ENCODE measurements at regions of chr12 and their contacts with region 1.

Region 1: DNA sequence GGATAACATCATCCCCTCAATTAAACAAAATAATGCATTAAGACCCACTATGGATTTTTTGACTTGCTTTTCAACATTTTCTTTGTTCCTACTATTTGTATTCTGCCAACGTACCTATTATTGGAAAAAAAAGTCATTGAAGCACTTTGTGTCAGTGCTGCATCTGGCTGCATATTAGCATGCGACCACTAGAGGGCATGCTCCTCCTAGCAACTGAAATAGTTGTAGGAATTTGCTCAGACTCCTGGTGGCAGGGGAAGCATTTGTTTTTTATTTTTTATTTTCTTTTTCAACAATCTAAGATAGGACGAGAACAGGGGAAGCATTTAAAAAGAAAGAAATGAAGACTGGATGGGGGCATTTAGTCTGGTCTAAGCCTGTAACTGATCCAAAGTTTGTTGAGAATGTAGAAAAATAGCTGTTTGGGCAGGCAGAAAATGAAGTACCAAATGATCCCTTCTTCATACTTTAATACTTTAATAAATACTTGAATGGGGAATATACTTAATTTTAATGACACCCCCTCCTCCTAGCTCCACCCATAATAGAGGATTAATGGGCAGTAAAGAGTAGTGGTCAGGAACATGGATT is 14.5 kb upstream of the CLEC4A start:
- DNase-seq: peak; percentile 67 to 78 (median 70)
- H3K4me3 ChIP-seq: peak overlapping the region in 1 of 3 experiments; percentile 31
- H3K4me3 Mint-ChIP-seq: peak overlapping the region in 1 of 2 donors; percentile 71
- H3K27ac ChIP-seq: no peak overlapping the region
- H3K27ac Mint-ChIP-seq: peak overlapping the region in 1 of 7 donors; percentile 33
- H3K4me1 ChIP-seq: peaks cover 0 to 3% of the 10 kb centered on the region in 2 donors
- H3K4me1 Mint-ChIP-seq: peaks cover 4% of the 10 kb centered on the region
- H3K27me3 ChIP-seq: no peaks in the 10 kb centered on the region
- H3K27me3 Mint-ChIP-seq: peaks cover 0 to 2% (median 2%) of the 10 kb centered on the region in 3 donors
- CTCF ChIP-seq: peak; percentile 99

Region 2: GRCh38 chr12:8156845-8157244 is 47.9 kb after region 1 on chr12 and contains the start of gene ZNF705A:
- intact Hi-C with region 1: loop called in 1 of 2 experiments (anchors 10 kb)
- DNase-seq: peak; percentile 76 to 95 (median 95)
- H3K4me3 ChIP-seq: peak within 1 kb of the TSS in 1 of 3 experiments; percentile 51
- H3K4me3 Mint-ChIP-seq: peak within 1 kb of the TSS; percentile 35 to 83
- H3K27ac ChIP-seq: peak within 1 kb of the TSS; percentile 48 to 92
- H3K27ac Mint-ChIP-seq: peak within 1 kb of the TSS; percentile 97 to 100 (median 98)
- H3K4me1 ChIP-seq: peaks cover 37 to 48% of the 10 kb centered on the region in 2 donors
- H3K4me1 Mint-ChIP-seq: peaks cover 52% of the 10 kb centered on the region
- H3K27me3 ChIP-seq: no peaks in the 10 kb centered on the region
- H3K27me3 Mint-ChIP-seq: no peaks in the 10 kb centered on the region
- CTCF ChIP-seq: no peak
- polyA plus RNA-seq, gene ZNF705A: not detected

Region 3: DNA sequence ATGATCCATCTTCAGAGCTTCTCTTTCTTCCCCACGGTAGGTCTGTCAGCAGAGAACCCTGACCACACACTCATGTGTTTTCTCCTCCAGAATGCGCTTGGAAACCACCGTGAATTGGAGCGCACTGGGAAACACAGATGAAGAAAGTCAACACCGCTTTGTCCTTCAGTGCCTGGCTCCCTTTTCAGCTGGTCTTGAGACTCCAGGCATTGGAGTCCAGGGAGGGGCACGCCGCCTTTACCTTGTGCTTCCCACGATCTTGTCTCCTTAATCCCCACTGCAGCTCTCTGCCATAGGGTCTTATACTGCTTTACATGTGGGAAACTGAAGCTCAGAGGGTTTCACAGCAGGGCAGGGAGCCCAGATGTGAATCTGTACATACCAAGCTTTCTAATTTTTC is 117.5 kb after region 1 on chr12:
- intact Hi-C with region 1: loop called (anchors 5 to 10 kb)
- DNase-seq: no peak
- H3K4me3 ChIP-seq: no peak overlapping the region
- H3K4me3 Mint-ChIP-seq: no peak overlapping the region
- H3K27ac ChIP-seq: no peak overlapping the region
- H3K27ac Mint-ChIP-seq: peak overlapping the region in 1 of 7 donors; percentile 69
- H3K4me1 ChIP-seq: peaks cover 5 to 14% of the 10 kb centered on the region in 2 donors
- H3K4me1 Mint-ChIP-seq: peaks cover 20% of the 10 kb centered on the region
- H3K27me3 ChIP-seq: no peaks in the 10 kb centered on the region
- H3K27me3 Mint-ChIP-seq: peaks cover 0 to 3% (median 2%) of the 10 kb centered on the region in 3 donors
- CTCF ChIP-seq: no peak

Region 4: DNA sequence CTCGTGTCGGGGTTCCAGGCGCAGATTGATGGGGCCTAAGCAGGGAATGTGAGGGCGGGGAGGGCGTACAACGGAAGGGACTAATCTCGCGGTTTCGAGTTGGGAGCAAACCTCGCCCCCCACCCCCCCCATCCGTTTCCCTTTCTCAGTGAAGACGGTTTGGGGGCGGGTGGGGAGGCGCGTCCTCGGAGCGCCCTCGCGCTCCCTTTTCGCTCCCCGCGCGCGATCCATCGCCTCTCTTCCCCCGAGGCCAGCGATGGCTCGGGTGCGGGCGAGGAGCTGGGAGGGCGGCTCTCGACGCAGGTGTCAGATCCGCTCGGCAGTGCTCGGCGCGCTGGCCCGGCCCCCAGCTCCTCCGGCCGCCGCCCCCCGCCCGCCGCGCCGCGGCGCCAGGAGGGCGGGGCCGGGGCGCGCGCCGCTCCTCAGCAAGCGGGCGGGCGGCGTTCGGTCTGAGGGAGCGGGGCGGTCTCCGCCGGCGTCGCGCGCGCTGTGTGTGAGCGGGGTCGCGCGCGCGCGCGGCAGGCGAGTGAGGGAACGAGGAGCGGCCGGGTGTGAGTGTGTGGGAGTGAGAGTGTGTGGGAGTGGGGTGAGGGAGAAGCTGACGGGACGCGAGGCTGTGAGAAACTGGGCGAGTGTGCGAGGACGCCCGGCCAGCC is 588.7 kb after region 1 on chr12 and contains the start of gene RIMKLB:
- intact Hi-C with region 1: no loop called
- DNase-seq: peak; percentile 56 to 67 (median 67)
- H3K4me3 ChIP-seq: peak within 1 kb of the TSS; percentile 50 to 86 (median 75)
- H3K4me3 Mint-ChIP-seq: peak within 1 kb of the TSS; percentile 94 to 96
- H3K27ac ChIP-seq: peak within 1 kb of the TSS; percentile 56 to 79
- H3K27ac Mint-ChIP-seq: peak within 1 kb of the TSS; percentile 70 to 90 (median 80)
- H3K4me1 ChIP-seq: peaks cover 20 to 21% of the 10 kb centered on the region in 2 donors
- H3K4me1 Mint-ChIP-seq: peaks cover 34% of the 10 kb centered on the region
- H3K27me3 ChIP-seq: peaks cover 3 to 6% of the 10 kb centered on the region in 2 donors
- H3K27me3 Mint-ChIP-seq: peaks cover 11 to 36% (median 21%) of the 10 kb centered on the region in 3 donors
- CTCF ChIP-seq: no peak
- polyA plus RNA-seq, gene RIMKLB: 1.0 to 6.6 (median 1.2) TPM